ENCODE measurements at regions of chr11 and their contacts with region 1.

Region 1: DNA sequence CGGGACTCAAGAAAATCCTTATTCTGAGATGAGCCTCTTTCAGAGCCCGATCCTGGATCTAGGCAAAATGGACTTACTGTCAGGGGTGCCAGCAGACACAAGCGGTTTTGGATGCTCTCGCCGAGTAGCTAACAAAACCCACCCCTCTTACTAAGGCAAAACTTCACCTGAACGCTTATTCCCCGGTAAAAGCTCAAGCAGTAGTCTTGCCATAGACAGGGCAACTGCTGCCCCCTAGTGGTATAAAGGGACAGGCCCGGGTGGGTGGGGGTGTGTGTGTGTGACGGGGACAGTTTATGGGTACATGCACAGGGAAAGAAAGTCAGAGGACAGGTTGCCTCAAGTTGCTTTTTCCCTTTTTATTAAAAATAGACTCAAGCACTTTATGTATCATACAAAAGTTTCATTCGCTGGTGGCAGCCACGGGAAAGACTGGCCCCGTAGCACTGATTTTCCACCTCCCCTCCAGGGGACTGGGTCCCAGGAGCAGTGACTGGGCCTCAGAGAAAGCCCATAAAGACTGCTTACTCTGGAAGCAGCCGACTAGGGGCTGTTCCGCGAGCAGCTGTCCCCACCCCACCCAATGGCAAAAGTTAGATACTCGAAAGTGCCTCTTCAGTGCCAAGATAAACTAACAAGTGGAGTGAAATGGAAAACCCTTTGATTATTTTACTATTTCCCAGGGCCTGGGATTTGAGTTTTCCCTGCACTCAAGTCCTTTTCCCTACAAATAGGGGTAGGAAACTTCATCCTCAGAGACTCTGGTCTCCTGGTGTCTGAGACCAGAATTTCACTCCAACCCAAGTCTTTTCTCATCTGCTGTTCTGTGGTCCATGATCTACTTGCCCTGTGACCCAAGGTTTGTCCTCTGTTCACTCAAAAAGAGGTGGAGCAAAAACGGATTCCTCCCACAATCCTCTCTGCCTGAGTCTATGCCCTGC is 4.7 kb downstream of the YPEL4 start:
- DNase-seq: peak; percentile 71 to 84 (median 76)
- ATAC-seq: peak; percentile 63 to 80 (median 79)
- H3K4me3 ChIP-seq: no peak overlapping the region
- H3K27ac ChIP-seq: no peak overlapping the region
- H3K4me1 ChIP-seq: peaks cover 0 to 29% (median under 1%) of the 10 kb centered on the region in 4 donors
- H3K27me3 ChIP-seq: peaks cover 0 to 11% of the 10 kb centered on the region in 2 donors
- CTCF ChIP-seq: peak; percentile 75 to 88 (median 84)
- POLR2A ChIP-seq: no peak

Region 2: GRCh38 chr11:57288771-57289579 is 356.0 kb before region 1 on chr11:
- intact Hi-C with region 1: no loop called
- DNase-seq: peak; percentile 58 to 71 (median 70)
- ATAC-seq: peak; percentile 66 to 77 (median 74)
- H3K4me3 ChIP-seq: no peak overlapping the region
- H3K27ac ChIP-seq: peak overlapping the region; percentile 49 to 83 (median 80)
- H3K4me1 ChIP-seq: peaks cover 0 to 41% (median 16%) of the 10 kb centered on the region in 4 donors
- H3K27me3 ChIP-seq: no peaks in the 10 kb centered on the region
- CTCF ChIP-seq: no peak
- POLR2A ChIP-seq: no peak

Region 3: GRCh38 chr11:57345555-57346211 is 299.3 kb before region 1 on chr11:
- intact Hi-C with region 1: loop called (anchors 10 kb)
- DNase-seq: peak; percentile 51 to 76 (median 59)
- ATAC-seq: peak; percentile 86 to 89 (median 88)
- H3K4me3 ChIP-seq: no peak overlapping the region
- H3K27ac ChIP-seq: no peak overlapping the region
- H3K4me1 ChIP-seq: no peaks in the 10 kb centered on the region
- H3K27me3 ChIP-seq: no peaks in the 10 kb centered on the region
- CTCF ChIP-seq: peak; percentile 68 to 84 (median 81)
- POLR2A ChIP-seq: no peak

Region 4: DNA sequence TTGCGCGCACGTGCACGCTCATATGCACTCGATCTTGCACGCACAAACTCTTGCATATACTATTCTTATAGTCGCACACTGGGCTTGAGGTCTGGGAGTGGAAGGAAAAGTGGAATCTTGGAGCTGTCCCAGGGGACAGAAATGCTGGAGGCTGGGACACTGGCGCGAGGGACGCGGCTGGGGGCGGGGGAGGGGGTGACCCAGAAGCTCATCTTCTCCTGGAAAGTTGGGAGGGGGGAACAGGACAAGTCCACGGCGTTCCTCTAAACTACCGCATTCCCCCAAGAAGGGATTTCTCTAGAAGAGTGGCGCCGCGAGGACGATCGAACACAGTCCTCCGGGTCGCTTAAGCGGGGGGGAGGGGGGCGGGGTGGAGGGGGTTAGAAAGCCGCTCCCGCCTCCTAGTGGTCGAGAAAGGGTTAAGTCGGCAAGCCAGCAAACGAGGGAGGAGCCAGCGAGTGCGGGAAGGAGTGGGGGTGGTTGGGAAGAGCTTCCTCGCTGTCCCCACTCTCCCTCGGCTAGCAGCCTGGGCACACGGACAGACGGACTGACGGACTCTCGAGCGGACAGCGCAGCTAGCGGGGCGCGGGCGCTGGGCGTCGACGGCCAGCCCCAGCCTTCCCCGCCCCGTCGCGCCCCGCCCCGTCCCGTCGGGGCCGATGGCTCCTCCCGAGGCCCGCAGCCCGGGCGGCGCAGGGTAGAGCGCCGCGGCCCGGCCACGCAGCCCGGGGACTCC is 184.8 kb before region 1 on chr11 and contains the start of gene RTN4RL2:
- intact Hi-C with region 1: loop called in 1 of 2 experiments (anchors 10 kb)
- DNase-seq: peak; percentile 76 to 80 (median 77)
- ATAC-seq: peak; percentile 35 to 56 (median 46)
- H3K4me3 ChIP-seq: peak within 1 kb of the TSS; percentile 56 to 65 (median 61)
- H3K27ac ChIP-seq: peak within 1 kb of the TSS; percentile 23 to 74 (median 57)
- H3K4me1 ChIP-seq: peaks cover 0 to 41% (median 7%) of the 10 kb centered on the region in 4 donors
- H3K27me3 ChIP-seq: no peaks in the 10 kb centered on the region
- CTCF ChIP-seq: peak in 2 of 4 donors; percentile 13 to 16
- POLR2A ChIP-seq: peak; percentile 31
- total RNA-seq, gene RTN4RL2: 12.5 to 54.4 (median 18.6) TPM

Region 5: DNA sequence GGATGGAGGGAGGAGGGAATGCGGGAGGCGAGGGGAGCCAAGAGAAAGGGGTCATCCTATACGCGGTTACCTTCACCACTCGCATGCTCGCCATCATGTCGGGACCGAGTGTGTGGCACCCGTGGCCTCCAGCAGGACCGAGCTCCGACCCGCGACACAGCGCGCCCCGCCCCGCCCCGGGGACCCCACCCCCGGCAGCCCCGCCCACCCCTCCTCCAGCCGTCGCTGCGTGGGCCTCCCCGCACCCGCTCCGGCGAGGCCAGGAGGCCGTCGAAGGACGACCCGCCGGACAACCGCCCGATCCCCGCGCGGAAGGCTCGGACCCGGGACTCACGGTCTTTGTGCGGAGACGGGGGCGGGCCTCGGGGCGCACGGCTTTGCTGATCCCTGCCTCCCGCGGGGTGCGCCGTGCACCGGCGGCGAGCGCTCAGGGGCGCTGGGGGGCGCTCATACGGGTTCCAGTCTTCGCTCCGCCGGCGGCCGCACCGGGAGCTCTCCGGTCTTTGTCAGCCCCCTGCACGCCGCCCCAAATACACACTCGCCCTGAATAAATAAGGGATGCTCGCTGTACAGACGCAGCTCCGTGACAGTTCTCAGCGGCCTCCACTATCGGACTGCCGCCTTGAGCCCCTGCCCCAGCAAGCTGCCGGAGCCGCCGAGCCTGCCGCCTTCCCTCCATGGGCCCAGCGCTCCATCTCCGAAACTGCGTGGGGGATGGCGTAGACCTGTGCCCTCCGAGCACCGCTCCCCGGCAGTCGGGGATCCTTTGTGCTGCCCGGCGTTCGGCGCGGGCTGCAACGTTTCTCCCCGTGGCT is 77.3 kb before region 1 on chr11 and contains the start of gene UBE2L6:
- intact Hi-C with region 1: loop called in 1 of 2 experiments (anchors 5 kb)
- DNase-seq: peak; percentile 84 to 85 (median 85)
- ATAC-seq: peak; percentile 67 to 85 (median 83)
- H3K4me3 ChIP-seq: peak within 1 kb of the TSS; percentile 60 to 93 (median 75)
- H3K27ac ChIP-seq: peak within 1 kb of the TSS; percentile 81 to 84 (median 82)
- H3K4me1 ChIP-seq: peaks cover 0 to 29% (median 3%) of the 10 kb centered on the region in 4 donors
- H3K27me3 ChIP-seq: no peaks in the 10 kb centered on the region
- CTCF ChIP-seq: peak in 2 of 4 donors; percentile 88 to 89
- POLR2A ChIP-seq: peak; percentile 22
- total RNA-seq, gene UBE2L6: 36.6 to 124 (median 58.6) TPM